ENCODE measurements at regions of chr11 and their contacts with region 1.

Region 1: GRCh38 chr11:123166071-123166559 is 28.9 kb downstream of the CLMP start:
- DNase-seq: no peak
- H3K4me3 ChIP-seq: no peak overlapping the region
- H3K27ac ChIP-seq: no peak overlapping the region
- H3K4me1 ChIP-seq: no peaks in the 10 kb centered on the region
- H3K27me3 ChIP-seq: peaks cover 0 to 1% of the 10 kb centered on the region in 2 experiments
- CTCF ChIP-seq: peak; percentile 49 to 53
- POLR2A ChIP-seq: no peak

Region 2: DNA sequence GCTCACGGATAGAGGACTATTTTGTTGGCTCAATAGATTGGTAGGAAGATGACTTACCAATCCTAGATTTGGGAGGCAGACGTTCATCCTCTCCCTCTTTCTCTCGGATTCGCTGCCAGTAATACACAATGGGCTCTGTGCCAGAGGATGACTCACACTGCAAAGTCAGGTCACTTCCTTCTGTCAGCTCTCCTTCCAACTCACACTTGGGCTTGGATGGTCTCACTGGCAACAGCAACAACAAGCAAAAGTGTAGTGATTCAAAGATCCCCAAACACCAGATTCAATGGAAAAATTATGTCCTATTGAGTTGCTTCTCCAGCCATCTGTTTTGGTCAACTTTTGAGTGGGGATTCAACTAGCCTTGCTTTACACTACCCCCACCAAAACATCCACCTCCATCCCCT is 82.5 kb before region 1 on chr11:
- CTCF ChIA-PET with region 1: no interaction called
- POLR2A ChIA-PET with region 1: no interaction called
- dilution Hi-C with region 1: no loop called
- intact Hi-C with region 1: no loop called
- DNase-seq: peak; percentile 96
- H3K4me3 ChIP-seq: no peak overlapping the region
- H3K27ac ChIP-seq: peak overlapping the region; percentile 74
- H3K4me1 ChIP-seq: peaks cover 15% of the 10 kb centered on the region
- H3K27me3 ChIP-seq: no peaks in the 10 kb centered on the region
- CTCF ChIP-seq: no peak
- POLR2A ChIP-seq: no peak

Region 3: DNA sequence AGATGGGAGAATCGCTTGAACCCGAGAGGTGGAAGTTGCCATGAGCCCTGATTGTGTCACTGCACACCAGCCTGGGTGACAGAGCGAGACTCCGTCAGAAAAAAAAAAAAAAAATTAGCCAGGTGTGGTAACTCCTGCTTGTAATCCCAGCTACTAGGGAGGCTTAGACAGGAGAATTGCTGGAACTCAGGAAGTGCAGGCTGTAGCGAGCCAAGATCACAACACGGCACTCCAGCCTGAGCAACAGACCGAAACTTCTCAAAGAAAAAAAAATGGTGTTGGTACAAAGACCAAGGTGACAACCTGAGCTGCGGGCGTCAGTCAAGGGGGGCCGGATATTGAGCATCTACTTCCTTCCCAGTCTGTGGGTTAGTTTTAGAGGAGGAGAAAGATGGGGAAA is 55.8 kb before region 1 on chr11:
- CTCF ChIA-PET with region 1: interaction called, 4 read pairs
- POLR2A ChIA-PET with region 1: no interaction called
- dilution Hi-C with region 1: no loop called
- intact Hi-C with region 1: loop called (anchors 5 kb)
- DNase-seq: no peak
- H3K4me3 ChIP-seq: no peak overlapping the region
- H3K27ac ChIP-seq: no peak overlapping the region
- H3K4me1 ChIP-seq: no peaks in the 10 kb centered on the region
- H3K27me3 ChIP-seq: no peaks in the 10 kb centered on the region
- CTCF ChIP-seq: no peak
- POLR2A ChIP-seq: no peak

Region 4: GRCh38 chr11:123330071-123330470 is 164.0 kb after region 1 on chr11:
- CTCF ChIA-PET with region 1: no interaction called
- POLR2A ChIA-PET with region 1: no interaction called
- dilution Hi-C with region 1: no loop called
- intact Hi-C with region 1: no loop called
- DNase-seq: peak; percentile 10
- H3K4me3 ChIP-seq: no peak overlapping the region
- H3K27ac ChIP-seq: no peak overlapping the region
- H3K4me1 ChIP-seq: no peaks in the 10 kb centered on the region
- H3K27me3 ChIP-seq: peaks cover 0 to 5% of the 10 kb centered on the region in 2 experiments
- CTCF ChIP-seq: no peak
- POLR2A ChIP-seq: no peak